Posterior cingulate gyrus (tissue), 11 donors: ENCODE measurements at regions of chr18 and their contacts with region 1.

Region 1: GRCh38 chr18:22627526-22627925 is 209.8 kb upstream of the CTAGE1 start:
- DNase-seq: no peak

Region 2: GRCh38 chr18:22703883-22704585 is 76.5 kb after region 1 on chr18:
- intact Hi-C with region 1: loop called (anchors 10 kb)
- DNase-seq: no peak